ENCODE measurements at regions of chr10 and their contacts with region 1.

Region 1: GRCh38 chr10:70363971-70364771 is 18.3 kb downstream of the LRRC20 start:
- DNase-seq: peak; percentile 95
- H3K27ac ChIP-seq: peak overlapping the region; percentile 99
- CTCF ChIP-seq: peak; percentile 88

Region 2: GRCh38 chr10:70221030-70221429 is 143.1 kb before region 1 on chr10:
- CTCF ChIA-PET with region 1: interaction called, 84 read pairs
- POLR2A ChIA-PET with region 1: no interaction called
- DNase-seq: no peak
- H3K27ac ChIP-seq: no peak overlapping the region
- CTCF ChIP-seq: no peak

Region 3: GRCh38 chr10:70233109-70233938 is 130.8 kb before region 1 on chr10 and contains the start of gene PPA1:
- CTCF ChIA-PET with region 1: interaction called, 12 read pairs
- POLR2A ChIA-PET with region 1: no interaction called
- DNase-seq: peak; percentile 100
- H3K27ac ChIP-seq: peak within 1 kb of the TSS; percentile 78
- CTCF ChIP-seq: peak; percentile 19; the same call in 1 of the 2 replicates

Region 4: GRCh38 chr10:70340137-70340536 is 24.0 kb before region 1 on chr10:
- CTCF ChIA-PET with region 1: interaction called, 11 read pairs
- POLR2A ChIA-PET with region 1: no interaction called
- DNase-seq: no peak
- H3K27ac ChIP-seq: no peak overlapping the region
- CTCF ChIP-seq: no peak

Region 5: GRCh38 chr10:70381471-70382421 is 17.6 kb after region 1 on chr10:
- CTCF ChIA-PET with region 1: interaction called, 17 read pairs
- POLR2A ChIA-PET with region 1: no interaction called
- DNase-seq: peak; percentile 48
- H3K27ac ChIP-seq: peak overlapping the region; percentile 82
- CTCF ChIP-seq: no peak

Region 6: GRCh38 chr10:70399177-70399576 is 35.0 kb after region 1 on chr10:
- CTCF ChIA-PET with region 1: no interaction called
- POLR2A ChIA-PET with region 1: no interaction called
- DNase-seq: no peak
- H3K27ac ChIP-seq: no peak overlapping the region
- CTCF ChIP-seq: no peak

Region 7: GRCh38 chr10:70494966-70495365 is 130.8 kb after region 1 on chr10:
- CTCF ChIA-PET with region 1: no interaction called
- POLR2A ChIA-PET with region 1: no interaction called
- DNase-seq: no peak
- H3K27ac ChIP-seq: no peak overlapping the region
- CTCF ChIP-seq: no peak

Measured in RWPE1 (cell line).